Vagina (tissue), 2 donors: ENCODE measurements at regions of chr12 and their contacts with region 1.

Region 1: DNA sequence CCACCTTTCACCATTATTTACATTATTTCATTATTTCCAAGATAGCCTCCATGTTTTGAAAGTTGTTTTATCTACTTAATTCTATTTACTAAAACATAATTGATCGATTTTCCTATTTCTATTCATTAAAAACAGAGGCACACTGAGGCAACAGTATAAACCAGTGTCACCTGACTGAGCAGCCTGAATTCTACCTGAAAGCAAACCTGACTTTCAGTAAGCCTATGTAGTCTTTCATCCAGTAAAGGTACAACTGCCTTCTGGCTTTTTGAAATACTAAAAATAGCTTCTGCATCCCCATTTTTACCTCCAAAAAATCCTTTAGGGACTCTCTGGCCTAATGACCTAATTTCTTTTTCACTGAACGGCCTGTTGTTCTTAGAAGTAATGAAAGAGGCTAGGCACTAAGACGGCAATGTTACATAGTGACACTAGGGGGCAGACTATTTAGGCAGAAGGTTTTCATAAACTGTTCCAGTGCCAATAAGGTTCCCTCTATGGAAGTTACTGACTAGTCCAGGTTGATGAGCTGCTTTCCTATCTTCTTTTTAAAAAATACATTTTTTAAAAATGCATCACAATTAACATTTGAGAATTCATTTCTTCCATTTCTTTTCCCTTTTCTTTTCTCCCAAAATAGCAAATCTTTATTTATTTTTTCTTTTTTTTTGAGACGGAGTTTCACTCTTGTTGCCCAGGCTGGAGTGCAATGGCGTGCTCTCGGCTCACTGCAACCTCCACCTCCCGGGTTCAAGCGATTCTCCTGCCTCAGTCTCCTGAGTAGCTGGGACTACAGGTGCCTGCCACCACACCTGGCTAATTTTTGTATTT is 17.5 kb downstream of the ANAPC5 start:
- DNase-seq: no peak
- H3K4me3 ChIP-seq: no peak overlapping the region
- H3K27ac ChIP-seq: no peak overlapping the region
- H3K4me1 ChIP-seq: no peaks in the 10 kb centered on the region
- H3K27me3 ChIP-seq: no peaks in the 10 kb centered on the region
- CTCF ChIP-seq: peak; percentile 46 to 74 (median 53)
- POLR2A ChIP-seq: no peak

Region 2: GRCh38 chr12:121443193-121443870 is 108.6 kb after region 1 on chr12:
- intact Hi-C with region 1: loop called (anchors 5 kb)
- DNase-seq: no peak
- H3K4me3 ChIP-seq: peak overlapping the region; percentile 2 to 20
- H3K27ac ChIP-seq: peak overlapping the region; percentile 33
- H3K4me1 ChIP-seq: peaks cover 13% of the 10 kb centered on the region
- H3K27me3 ChIP-seq: no peaks in the 10 kb centered on the region
- CTCF ChIP-seq: peak; percentile 53 to 72 (median 59)
- POLR2A ChIP-seq: no peak